Aorta (tissue), 5 donors: ENCODE measurements at regions of chr18 and their contacts with region 1.

Region 1: DNA sequence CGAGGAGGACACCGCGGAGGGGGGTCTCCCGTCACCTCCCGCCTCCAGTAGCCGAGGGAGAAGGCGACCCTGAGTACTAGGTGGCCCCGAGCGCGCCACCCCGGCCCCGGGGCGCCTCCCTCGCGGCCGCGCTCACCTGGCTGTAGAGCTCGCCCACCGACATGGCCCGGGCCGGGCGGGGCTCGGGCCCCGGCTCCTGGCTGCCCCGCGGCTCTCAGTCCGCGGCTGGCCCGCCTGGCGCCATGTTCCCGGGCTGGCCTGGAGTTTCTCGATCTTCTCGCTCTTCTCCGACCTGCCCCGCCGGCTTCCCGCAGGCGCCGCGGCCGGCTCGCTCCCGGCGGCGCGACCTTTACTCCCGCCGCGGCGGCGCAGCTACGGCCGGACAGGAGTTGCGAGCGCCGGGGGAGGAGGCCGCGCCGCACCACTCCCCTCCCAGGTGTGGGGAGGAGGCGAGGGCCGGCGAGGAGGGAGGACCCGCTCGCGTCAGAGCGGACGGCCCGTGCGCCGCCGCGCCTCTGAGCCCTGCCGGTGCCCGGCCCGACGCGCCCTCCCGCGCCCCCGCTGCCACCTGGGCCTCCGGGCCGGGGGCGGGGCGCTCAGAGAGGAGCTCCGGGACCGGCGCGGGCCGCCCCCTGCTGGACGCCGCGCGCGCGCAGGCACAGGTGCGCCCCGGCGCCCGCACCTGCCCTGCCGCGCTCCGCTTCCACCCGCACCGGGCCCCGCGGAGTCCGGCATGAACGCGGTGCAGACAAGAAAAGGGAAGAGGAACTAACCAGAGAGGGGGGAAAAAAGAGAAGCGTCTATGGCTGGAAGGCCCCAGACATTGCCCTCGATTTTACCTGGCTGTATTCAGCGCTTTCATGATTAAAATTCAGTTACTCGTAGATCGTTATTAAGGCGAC is at the start of gene MYO5B:
- DNase-seq: peak in 1 of 2 donors; percentile 48
- ATAC-seq: peak; percentile 64
- H3K4me3 ChIP-seq: peak within 1 kb of the TSS; percentile 85 to 95
- H3K27ac ChIP-seq: no peak within 1 kb of the TSS
- H3K4me1 ChIP-seq: no peaks in the 10 kb centered on the region
- H3K27me3 ChIP-seq: no peaks in the 10 kb centered on the region
- total RNA-seq, gene MYO5B: 1.2 to 4.5 TPM

Region 2: DNA sequence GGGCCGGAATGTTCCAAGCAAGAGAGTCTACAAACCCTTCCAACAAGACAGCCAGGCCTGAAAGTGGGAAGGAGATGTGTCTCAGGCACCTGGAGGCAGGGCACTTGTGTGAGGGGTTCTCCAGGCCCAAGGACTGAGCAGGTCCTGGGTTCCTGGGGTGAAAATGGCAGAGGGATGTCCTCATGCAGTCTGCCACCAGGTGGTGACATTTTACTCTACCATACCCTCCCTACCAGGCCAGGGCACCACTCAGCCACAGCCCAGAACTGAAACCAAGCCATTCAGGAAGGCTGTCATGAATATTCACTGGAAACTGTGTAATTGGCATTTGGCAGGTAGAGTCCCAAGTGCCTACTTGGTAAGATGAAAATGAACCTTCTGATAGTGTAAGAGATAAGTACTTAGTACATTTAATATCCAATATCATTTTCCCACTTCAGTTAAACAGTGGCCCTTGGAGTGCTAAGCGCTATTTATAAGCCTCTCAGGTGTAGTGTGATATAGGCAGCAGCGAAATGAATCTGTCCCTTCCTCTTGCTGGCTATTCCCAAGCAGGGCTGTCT is 185.0 kb before region 1 on chr18:
- intact Hi-C with region 1: loop called in 1 of 2 experiments (anchors 2 kb)
- DNase-seq: peak in 1 of 2 donors; percentile 51
- ATAC-seq: peak; percentile 43
- H3K4me3 ChIP-seq: no peak overlapping the region
- H3K27ac ChIP-seq: no peak overlapping the region
- H3K4me1 ChIP-seq: no peaks in the 10 kb centered on the region
- H3K27me3 ChIP-seq: no peaks in the 10 kb centered on the region

Region 3: DNA sequence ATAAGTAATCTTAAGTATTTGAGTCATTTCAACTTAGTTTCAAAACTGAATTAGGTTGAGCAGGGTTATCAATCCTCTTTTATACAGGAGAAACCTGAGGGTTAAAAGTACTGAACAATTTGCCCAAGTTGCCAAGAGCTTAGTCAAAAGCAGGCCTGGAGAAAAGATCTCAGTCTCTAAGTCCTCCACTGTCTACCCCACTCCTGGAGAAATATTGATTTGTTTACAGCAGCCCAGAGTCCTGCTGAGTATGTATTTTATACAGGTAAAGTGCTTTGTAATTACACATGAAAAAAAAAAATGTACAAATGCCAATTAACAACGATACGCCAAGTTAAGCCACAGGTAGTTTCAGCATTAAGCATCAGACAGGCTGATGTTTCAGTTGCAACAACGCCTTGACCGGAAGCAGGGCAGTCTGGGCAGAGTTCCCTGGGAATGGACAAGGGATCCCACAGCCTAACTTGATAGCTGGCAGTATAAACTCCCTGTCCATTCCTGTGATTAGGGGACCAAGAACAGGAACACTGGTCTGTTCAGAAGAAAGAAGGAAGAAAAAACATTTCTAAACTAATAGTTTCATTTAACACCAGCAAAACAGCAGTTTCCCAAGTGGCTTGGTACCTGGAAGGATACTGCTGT is 132.9 kb before region 1 on chr18:
- intact Hi-C with region 1: loop called in 1 of 2 experiments (anchors 2 kb)
- DNase-seq: peak in 1 of 2 donors; percentile 67
- ATAC-seq: no peak
- H3K4me3 ChIP-seq: no peak overlapping the region
- H3K27ac ChIP-seq: no peak overlapping the region
- H3K4me1 ChIP-seq: no peaks in the 10 kb centered on the region
- H3K27me3 ChIP-seq: no peaks in the 10 kb centered on the region

Region 4: GRCh38 chr18:50281295-50281971 is 86.6 kb after region 1 on chr18 and contains the start of gene MBD1:
- intact Hi-C with region 1: no loop called
- DNase-seq: peak; percentile 99
- ATAC-seq: peak; percentile 96
- H3K4me3 ChIP-seq: peak within 1 kb of the TSS; percentile 33 to 80
- H3K27ac ChIP-seq: peak within 1 kb of the TSS; percentile 6 to 75
- H3K4me1 ChIP-seq: peaks cover 0 to 3% of the 10 kb centered on the region in 2 donors
- H3K27me3 ChIP-seq: no peaks in the 10 kb centered on the region
- total RNA-seq, gene MBD1: 62.1 to 76.6 TPM